WTC11 (cell line): ENCODE measurements at regions of chr19 and their contacts with region 1.

Region 1: GRCh38 chr19:35055715-35056179 is 14.2 kb downstream of the HPN start:
- DNase-seq: peak; percentile 83
- ATAC-seq: peak; percentile 96
- H3K4me3 Mint-ChIP-seq: peak overlapping the region; percentile 18
- H3K27ac Mint-ChIP-seq: peak overlapping the region; percentile 43; the same call in 1 of the 2 replicates
- H3K4me1 Mint-ChIP-seq: peaks cover 19% of the 10 kb centered on the region
- H3K27me3 Mint-ChIP-seq: no peaks in the 10 kb centered on the region; the same call in 1 of the 2 replicates
- CTCF ChIP-seq: peak; percentile 36

Region 2: GRCh38 chr19:35002037-35002535 is 53.7 kb before region 1 on chr19:
- CTCF ChIA-PET with region 1: no interaction called
- POLR2A ChIA-PET with region 1: no interaction called
- DNase-seq: no peak
- ATAC-seq: no peak
- H3K4me3 Mint-ChIP-seq: peak overlapping the region; percentile 100
- H3K27ac Mint-ChIP-seq: peak overlapping the region; percentile 93
- H3K4me1 Mint-ChIP-seq: peaks cover 60% of the 10 kb centered on the region
- H3K27me3 Mint-ChIP-seq: no peaks in the 10 kb centered on the region
- CTCF ChIP-seq: no peak

Region 3: DNA sequence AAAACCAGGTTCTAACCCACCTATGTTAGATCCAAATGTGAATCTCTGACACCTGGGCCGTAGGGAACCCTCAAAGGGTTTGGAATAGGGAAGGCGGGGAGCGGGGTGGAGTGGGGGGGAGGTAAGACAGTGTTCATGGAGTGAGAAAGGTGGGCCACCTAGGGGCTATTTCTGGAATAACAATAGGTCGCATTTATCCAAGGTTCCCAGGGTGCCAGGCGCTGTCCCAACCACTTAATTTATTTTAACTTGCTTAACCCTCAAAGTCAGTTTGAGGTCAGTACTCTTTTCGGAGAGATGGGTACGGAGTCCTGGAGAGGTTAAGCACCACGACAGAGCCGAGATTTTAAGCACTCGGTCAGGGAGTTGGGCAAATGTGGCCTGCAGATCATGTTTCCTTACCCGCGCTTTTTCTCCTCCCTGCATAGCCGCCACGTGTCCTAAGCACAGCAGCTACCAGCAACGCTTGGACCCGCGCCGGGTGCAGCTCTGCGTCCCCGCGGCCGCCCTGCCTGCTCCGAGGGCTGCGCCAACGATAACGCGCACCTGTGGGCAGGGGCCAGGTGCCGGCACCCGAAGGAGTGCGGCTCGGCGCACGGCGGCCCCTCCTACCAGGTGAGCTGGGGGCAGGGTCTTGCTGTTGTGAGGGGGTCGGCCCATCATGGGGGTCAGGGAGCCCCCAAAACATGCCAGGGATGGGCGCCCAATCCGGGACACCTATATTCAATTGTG is 34.9 kb after region 1 on chr19:
- CTCF ChIA-PET with region 1: interaction called, 23 read pairs
- POLR2A ChIA-PET with region 1: no interaction called
- DNase-seq: peak; percentile 72
- ATAC-seq: peak; percentile 87
- H3K4me3 Mint-ChIP-seq: peak overlapping the region; percentile 55
- H3K27ac Mint-ChIP-seq: no peak overlapping the region
- H3K4me1 Mint-ChIP-seq: peaks cover 15% of the 10 kb centered on the region
- H3K27me3 Mint-ChIP-seq: peaks cover 5% of the 10 kb centered on the region
- CTCF ChIP-seq: peak; percentile 74

Region 4: DNA sequence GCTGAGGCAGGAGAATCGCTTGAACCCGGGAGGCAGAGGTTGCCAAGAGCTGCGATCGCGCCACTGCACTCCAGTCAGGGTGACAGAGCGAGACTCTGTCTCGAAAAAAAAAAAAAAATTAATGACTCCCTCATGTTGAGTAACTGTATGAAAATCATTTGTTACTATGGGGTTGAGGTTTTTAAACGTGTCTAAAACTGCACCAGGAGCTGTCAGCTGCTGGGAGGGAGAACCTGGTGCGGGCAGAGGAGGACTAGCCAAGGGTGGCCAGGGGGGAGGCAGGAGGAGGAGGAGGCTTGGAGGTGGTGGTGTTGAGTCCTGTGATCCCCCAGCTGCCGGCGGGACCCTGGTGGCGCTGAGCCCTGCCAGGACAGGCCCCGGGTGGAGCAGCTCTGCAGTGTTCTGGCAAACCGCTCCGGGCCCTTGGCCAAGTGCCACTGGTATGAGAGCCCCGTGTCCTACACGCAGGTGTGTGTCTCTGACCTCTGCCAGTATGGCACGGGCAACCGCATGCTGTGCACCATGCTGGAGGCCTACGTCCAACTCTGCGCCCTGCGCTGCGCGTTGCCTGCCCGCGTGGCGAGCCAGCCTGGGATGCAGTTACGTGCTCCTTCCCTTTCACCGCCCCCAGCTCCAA is 42.8 kb after region 1 on chr19:
- CTCF ChIA-PET with region 1: interaction called, 12 read pairs
- POLR2A ChIA-PET with region 1: no interaction called
- DNase-seq: no peak
- ATAC-seq: no peak
- H3K4me3 Mint-ChIP-seq: no peak overlapping the region
- H3K27ac Mint-ChIP-seq: no peak overlapping the region
- H3K4me1 Mint-ChIP-seq: peaks cover 10% of the 10 kb centered on the region
- H3K27me3 Mint-ChIP-seq: no peaks in the 10 kb centered on the region
- CTCF ChIP-seq: no peak

Region 5: GRCh38 chr19:35114353-35115176 is 58.8 kb after region 1 on chr19:
- CTCF ChIA-PET with region 1: interaction called, 17 read pairs
- POLR2A ChIA-PET with region 1: no interaction called
- DNase-seq: peak; percentile 92
- ATAC-seq: peak; percentile 82
- H3K4me3 Mint-ChIP-seq: peak overlapping the region; percentile 65
- H3K27ac Mint-ChIP-seq: no peak overlapping the region
- H3K4me1 Mint-ChIP-seq: peaks cover 46% of the 10 kb centered on the region
- H3K27me3 Mint-ChIP-seq: peaks cover 3% of the 10 kb centered on the region
- CTCF ChIP-seq: peak; percentile 99

Region 6: GRCh38 chr19:35124098-35125060 is 68.6 kb after region 1 on chr19:
- CTCF ChIA-PET with region 1: interaction called, 12 read pairs
- POLR2A ChIA-PET with region 1: no interaction called
- DNase-seq: peak; percentile 75
- ATAC-seq: peak; percentile 63
- H3K4me3 Mint-ChIP-seq: peak overlapping the region; percentile 40
- H3K27ac Mint-ChIP-seq: peak overlapping the region; percentile 41; the same call in 1 of the 2 replicates
- H3K4me1 Mint-ChIP-seq: peaks cover 31% of the 10 kb centered on the region
- H3K27me3 Mint-ChIP-seq: peaks cover 4% of the 10 kb centered on the region
- CTCF ChIP-seq: no peak